Endothelial cell of umbilical vein (primary cell): ENCODE measurements at regions of chr5 and their contacts with region 1.

Region 1: GRCh38 chr5:149381987-149382340 is 2.9 kb upstream of the IL17B start:
- DNase-seq: peak; percentile 60
- H3K4me3 ChIP-seq: no peak overlapping the region
- H3K27ac ChIP-seq: no peak overlapping the region
- H3K4me1 ChIP-seq: no peaks in the 10 kb centered on the region
- H3K27me3 ChIP-seq: no peaks in the 10 kb centered on the region
- CTCF ChIP-seq: peak; percentile 86 to 97
- POLR2A ChIP-seq: no peak

Region 2: DNA sequence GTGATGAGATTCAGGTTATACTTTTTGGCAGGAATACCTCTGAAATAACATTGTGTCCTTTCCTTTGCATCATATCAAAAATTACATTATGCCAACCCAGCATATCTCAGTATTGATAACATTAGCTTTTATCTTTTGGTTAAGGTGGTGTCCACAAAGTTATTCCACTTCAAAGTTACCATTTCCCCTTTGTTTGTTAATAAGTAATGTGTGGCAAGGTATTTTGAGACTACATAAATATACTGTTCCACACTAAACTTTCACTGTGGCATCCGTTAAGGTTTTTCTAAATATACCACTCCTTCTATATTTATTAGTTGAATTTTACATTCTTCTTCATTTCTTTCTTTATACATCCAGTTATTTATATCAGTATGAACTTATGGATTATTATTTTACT is 185.3 kb after region 1 on chr5:
- CTCF ChIA-PET with region 1: interaction called, 40 read pairs
- POLR2A ChIA-PET with region 1: no interaction called
- dilution Hi-C with region 1: no loop called
- intact Hi-C with region 1: loop called (anchors 1 kb)
- DNase-seq: no peak
- H3K4me3 ChIP-seq: no peak overlapping the region
- H3K27ac ChIP-seq: no peak overlapping the region
- H3K4me1 ChIP-seq: peaks cover 22% of the 10 kb centered on the region
- H3K27me3 ChIP-seq: no peaks in the 10 kb centered on the region
- CTCF ChIP-seq: no peak
- POLR2A ChIP-seq: no peak